ENCODE measurements at regions of chr6 and their contacts with region 1.

Region 1: GRCh38 chr6:152727525-152727924 is 23.1 kb upstream of the VIP start:
- DNase-seq: no peak

Region 2: DNA sequence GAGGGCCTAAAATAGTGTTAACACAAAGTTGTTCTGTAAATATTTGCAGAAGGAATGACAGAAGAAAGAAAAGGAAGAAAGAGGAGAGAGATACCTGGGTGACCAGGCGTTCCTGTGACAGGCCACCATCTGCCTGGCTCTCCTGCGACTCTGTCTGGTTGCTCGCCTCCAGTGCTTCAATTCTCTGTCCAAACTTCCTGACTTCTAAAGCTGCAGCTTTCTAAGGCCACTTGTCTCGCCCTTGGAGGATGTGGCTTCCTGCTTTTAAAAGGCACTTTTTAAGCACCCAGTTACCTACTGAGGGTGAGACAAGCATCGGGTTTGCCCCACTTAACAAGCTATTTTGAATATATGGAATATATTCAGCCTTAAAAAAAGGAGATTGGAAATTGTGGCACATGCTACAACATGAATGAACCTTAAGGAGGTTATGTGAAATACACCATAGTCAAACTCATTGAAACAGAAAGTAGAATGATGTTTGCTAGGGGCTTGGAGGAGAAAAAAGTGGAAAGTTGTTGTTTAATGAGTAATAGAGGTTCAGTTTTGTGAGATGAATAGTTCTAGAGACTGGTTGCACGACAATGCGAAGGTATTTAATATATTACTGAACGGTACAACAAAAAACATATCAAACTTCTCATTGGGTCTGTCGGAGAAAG is 55.8 kb after region 1 on chr6:
- CTCF ChIA-PET with region 1: interaction called, 10 read pairs
- POLR2A ChIA-PET with region 1: no interaction called
- DNase-seq: no peak